ENCODE measurements at regions of chr6 and their contacts with region 1.

Region 1: DNA sequence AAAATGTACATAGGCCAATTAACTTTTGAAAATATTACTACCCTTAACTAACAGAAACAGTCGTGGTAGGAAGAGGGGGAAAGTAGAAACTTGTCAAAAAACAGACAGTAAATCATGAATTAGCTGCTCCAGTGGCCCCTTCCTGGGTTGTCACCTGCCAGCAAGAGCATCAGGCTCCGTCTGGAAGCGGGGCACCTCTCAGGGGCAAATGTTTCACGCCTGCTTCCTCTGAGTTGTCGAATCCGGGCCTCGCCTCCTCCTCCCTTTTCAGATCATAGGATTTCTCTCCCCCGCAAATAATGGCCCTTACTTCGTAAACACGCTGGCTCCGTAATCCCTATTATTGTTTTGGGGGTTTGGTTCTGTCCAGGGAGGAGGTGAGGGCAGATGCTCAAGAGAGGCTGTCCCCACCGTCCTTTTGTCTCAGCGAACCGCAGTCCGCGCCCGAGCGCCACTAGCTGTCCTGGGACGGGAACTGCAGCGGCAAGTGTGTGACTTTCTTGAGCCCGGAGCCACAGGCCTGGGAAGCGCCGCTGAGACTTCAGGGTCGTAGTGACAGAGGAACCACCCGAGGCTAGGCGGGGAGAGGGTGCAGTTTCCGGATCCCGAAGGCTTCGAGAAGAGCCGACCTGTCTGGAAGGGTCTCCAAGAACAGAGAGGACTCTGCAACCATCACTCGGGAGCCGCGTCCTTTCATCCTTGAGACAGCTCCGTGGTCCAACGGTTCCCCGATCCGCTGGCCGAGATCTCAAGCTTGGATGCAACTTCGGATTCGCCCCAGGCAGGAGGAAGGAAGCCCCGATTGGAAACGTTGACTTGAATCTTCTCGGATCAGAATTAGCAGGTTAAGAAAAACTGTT is 214.5 kb upstream of the ZNF184 start:
- DNase-seq: peak; percentile 92
- H3K4me3 Mint-ChIP-seq: peak overlapping the region; percentile 91
- H3K27ac Mint-ChIP-seq: peak overlapping the region; percentile 86
- H3K4me1 Mint-ChIP-seq: peaks cover 18% of the 10 kb centered on the region
- H3K27me3 Mint-ChIP-seq: peaks cover 21% of the 10 kb centered on the region

Region 2: DNA sequence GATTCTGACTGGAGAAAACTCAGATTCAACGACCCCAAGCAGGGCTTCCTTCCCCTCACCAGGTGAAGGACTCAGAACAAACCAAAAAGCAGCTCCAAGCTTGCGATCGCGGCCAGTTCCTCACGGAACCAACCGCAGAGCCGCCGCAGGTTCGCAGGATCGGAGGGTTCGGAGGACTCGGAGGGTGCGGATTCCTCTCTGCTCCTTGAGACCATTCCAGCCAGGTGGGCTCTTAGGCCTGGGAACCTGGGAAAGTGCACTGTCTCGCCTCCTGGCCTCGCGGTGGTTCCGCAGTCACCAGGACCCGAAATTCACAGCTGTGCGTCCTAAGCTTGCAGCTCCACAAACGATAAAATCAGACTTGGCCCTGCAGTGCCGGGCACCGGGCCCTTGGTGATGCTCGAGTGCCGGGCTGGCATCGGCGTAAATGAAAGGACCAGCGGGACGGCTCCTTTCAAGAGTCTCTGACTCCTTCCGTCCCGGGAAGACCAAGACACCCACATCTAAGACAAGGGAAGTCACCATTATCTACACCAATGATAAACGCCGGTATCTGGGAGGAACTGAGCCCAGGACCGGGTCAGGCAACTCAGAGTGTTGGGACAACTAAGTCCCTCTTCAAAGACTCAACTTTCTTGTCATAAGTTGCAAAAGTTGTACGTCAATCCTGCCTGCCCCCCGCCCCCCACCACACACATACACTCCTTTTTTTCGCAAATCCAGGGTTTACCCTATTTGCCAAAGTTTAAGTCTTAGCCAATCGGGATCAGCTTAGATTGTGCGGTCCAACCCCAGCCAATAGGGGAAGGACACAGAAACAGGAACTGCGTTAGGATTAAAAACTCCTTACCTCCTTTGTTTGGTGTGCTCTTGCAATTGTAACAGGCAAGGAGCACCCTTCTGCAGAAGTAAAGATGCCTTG is 509.6 kb before region 1 on chr6:
- intact Hi-C with region 1: loop called (anchors 5 kb)
- DNase-seq: peak; percentile 92
- H3K4me3 Mint-ChIP-seq: peak overlapping the region; percentile 95
- H3K27ac Mint-ChIP-seq: peak overlapping the region; percentile 93
- H3K4me1 Mint-ChIP-seq: peaks cover 17% of the 10 kb centered on the region
- H3K27me3 Mint-ChIP-seq: peaks cover 33% of the 10 kb centered on the region

Region 3: GRCh38 chr6:27592481-27593199 is 94.7 kb before region 1 on chr6:
- intact Hi-C with region 1: loop called (anchors 5 kb)
- DNase-seq: peak; percentile 83
- H3K4me3 Mint-ChIP-seq: no peak overlapping the region
- H3K27ac Mint-ChIP-seq: no peak overlapping the region
- H3K4me1 Mint-ChIP-seq: peaks cover 2% of the 10 kb centered on the region
- H3K27me3 Mint-ChIP-seq: peaks cover 27% of the 10 kb centered on the region

Region 4: GRCh38 chr6:28648035-28648877 is 960.9 kb after region 1 on chr6:
- intact Hi-C with region 1: loop called (anchors 10 kb)
- DNase-seq: peak; percentile 84
- H3K4me3 Mint-ChIP-seq: peak overlapping the region; percentile 86
- H3K27ac Mint-ChIP-seq: peak overlapping the region; percentile 61
- H3K4me1 Mint-ChIP-seq: peaks cover 7% of the 10 kb centered on the region
- H3K27me3 Mint-ChIP-seq: peaks cover 43% of the 10 kb centered on the region

Region 5: DNA sequence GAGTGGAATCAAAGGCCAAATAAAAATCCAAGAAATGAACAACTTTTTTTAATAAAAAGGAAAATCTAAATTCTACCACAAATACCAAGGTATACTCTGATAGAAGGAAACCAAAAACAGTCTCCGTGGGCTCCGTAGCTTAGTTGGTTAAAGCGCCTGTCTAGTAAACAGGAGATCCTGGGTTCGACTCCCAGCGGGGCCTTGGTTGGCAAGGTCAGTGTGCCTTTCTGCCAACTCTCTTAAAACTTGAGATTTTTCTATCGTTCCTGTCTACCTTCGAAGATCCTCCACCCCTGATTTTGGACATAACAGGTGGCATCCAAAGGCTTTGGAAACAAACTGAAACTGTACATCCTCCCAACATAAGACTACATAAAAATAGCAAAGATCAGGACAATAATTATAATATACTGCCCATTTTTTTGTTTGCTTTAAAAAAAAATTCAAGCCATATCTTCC is 1038.5 kb after region 1 on chr6:
- intact Hi-C with region 1: loop called (anchors 5 kb)
- DNase-seq: no peak
- H3K4me3 Mint-ChIP-seq: no peak overlapping the region
- H3K27ac Mint-ChIP-seq: no peak overlapping the region
- H3K4me1 Mint-ChIP-seq: peaks cover 16% of the 10 kb centered on the region
- H3K27me3 Mint-ChIP-seq: peaks cover 65% of the 10 kb centered on the region

Measured in activated CD4-positive, alpha-beta T cell treated with anti-CD3 and anti-CD28 coated beads, Interleukin-2, amount 10 ng/mL, durations not matched to agents 24 days and 14 days (primary cell).